ENCODE measurements at regions of chr19 and their contacts with region 1.

Region 1: GRCh38 chr19:52171321-52172169 is at the start of gene ZNF836:
- DNase-seq: peak; percentile 90
- H3K4me3 ChIP-seq: peak within 1 kb of the TSS; percentile 84
- H3K27ac ChIP-seq: peak within 1 kb of the TSS; percentile 39
- H3K4me1 ChIP-seq: peaks cover 17% of the 10 kb centered on the region
- CTCF ChIP-seq: no peak
- total RNA-seq, gene ZNF836: 8.0 and 13.2 TPM in 2 replicates

Region 2: GRCh38 chr19:52189735-52190486 is 18.4 kb after region 1 on chr19 and contains the start of gene PPP2R1A:
- CTCF ChIA-PET with region 1: no interaction called
- POLR2A ChIA-PET with region 1: interaction called, 10 read pairs
- intact Hi-C with region 1: no loop called
- DNase-seq: peak; percentile 100
- H3K4me3 ChIP-seq: peak within 1 kb of the TSS; percentile 98
- H3K27ac ChIP-seq: peak within 1 kb of the TSS; percentile 91
- H3K4me1 ChIP-seq: peaks cover 38% of the 10 kb centered on the region
- CTCF ChIP-seq: no peak
- total RNA-seq, gene PPP2R1A: 117 and 154 TPM in 2 replicates

Region 3: DNA sequence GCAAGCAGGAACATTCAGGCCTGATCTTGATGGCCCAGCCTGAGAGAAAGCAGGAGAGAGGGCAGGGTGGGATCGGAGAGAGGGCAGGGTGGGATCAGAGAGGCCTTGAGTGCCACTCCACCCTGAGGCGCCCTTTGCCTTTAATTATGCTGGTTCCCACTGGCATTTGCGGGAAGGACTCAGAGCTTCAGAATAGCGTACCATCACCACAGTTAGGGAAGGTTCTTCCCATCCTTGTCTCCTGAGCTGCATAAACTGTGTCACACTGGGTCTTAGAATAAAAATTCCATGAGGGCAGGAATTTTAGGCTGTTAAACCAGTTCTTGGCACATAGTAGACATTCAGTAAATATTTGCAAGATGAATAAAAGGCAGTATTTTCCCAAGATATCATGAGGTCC is 42.6 kb after region 1 on chr19:
- CTCF ChIA-PET with region 1: no interaction called
- POLR2A ChIA-PET with region 1: no interaction called
- intact Hi-C with region 1: no loop called
- DNase-seq: no peak
- H3K4me3 ChIP-seq: no peak overlapping the region
- H3K27ac ChIP-seq: no peak overlapping the region
- H3K4me1 ChIP-seq: no peaks in the 10 kb centered on the region
- CTCF ChIP-seq: no peak